ENCODE measurements at regions of chr10 and their contacts with region 1.

Region 1: DNA sequence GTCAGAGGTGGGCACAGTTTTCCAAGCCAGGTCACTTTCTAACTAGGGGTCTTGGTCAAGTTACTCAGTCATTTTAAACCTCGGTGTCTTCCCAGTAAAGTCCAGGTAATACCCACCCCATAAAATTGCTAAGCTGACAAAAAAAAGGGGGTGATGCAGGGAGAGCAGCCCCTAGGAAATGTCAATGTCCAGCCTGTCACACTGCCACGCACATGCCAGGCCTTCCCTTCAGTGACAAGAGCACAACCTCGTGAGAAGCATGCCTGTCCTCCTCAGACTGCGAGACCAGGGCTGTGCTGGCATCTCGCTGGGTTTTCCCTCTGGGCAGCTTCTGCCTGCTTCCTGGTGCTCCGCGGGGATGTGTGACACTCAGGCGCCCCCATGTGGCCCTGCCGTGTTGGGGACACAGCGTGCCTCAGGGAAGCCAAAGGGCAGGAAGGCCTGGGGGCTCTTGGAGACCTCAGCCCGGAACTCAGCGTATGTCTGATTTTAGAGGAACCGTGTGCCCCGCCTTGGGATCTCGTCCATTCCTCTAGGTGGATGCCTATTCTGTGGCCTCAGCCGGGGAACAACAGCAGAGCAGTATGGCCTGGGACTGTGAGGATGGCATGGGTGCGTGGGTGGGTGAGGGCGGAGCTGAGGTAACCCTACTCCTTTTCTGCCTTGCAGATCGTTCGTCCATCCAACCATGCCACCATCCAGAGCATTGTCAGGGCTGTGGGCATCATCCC is 10.2 kb upstream of the GDF2 start:
- DNase-seq: peak; percentile 76 to 86
- ATAC-seq: peak; percentile 89 to 97
- H3K4me3 ChIP-seq: no peak overlapping the region
- H3K27ac ChIP-seq: no peak overlapping the region
- H3K4me1 ChIP-seq: no peaks in the 10 kb centered on the region
- CTCF ChIP-seq: peak; percentile 85
- EP300 ChIP-seq: no peak
- POLR2A ChIP-seq: no peak
- RAD21 ChIP-seq: peak; percentile 95

Region 2: GRCh38 chr10:46992803-46993561 is 319.1 kb before region 1 on chr10:
- CTCF ChIA-PET with region 1: interaction called, 55 read pairs
- POLR2A ChIA-PET with region 1: no interaction called
- DNase-seq: peak; percentile 28 to 31
- ATAC-seq: peak; percentile 92
- H3K4me3 ChIP-seq: no peak overlapping the region
- H3K27ac ChIP-seq: 0 out of 6 replicates have a peak overlapping the region, but pooled peaks of 1 of the 2 experiments have one; percentile 13
- H3K4me1 ChIP-seq: no peaks in the 10 kb centered on the region
- CTCF ChIP-seq: peak; percentile 32; the same call in 2 of the 3 replicates
- EP300 ChIP-seq: no peak
- POLR2A ChIP-seq: no peak
- RAD21 ChIP-seq: peak in 1 of 2 experiments; percentile 46; a peak in 4 of 5 replicates

Region 3: DNA sequence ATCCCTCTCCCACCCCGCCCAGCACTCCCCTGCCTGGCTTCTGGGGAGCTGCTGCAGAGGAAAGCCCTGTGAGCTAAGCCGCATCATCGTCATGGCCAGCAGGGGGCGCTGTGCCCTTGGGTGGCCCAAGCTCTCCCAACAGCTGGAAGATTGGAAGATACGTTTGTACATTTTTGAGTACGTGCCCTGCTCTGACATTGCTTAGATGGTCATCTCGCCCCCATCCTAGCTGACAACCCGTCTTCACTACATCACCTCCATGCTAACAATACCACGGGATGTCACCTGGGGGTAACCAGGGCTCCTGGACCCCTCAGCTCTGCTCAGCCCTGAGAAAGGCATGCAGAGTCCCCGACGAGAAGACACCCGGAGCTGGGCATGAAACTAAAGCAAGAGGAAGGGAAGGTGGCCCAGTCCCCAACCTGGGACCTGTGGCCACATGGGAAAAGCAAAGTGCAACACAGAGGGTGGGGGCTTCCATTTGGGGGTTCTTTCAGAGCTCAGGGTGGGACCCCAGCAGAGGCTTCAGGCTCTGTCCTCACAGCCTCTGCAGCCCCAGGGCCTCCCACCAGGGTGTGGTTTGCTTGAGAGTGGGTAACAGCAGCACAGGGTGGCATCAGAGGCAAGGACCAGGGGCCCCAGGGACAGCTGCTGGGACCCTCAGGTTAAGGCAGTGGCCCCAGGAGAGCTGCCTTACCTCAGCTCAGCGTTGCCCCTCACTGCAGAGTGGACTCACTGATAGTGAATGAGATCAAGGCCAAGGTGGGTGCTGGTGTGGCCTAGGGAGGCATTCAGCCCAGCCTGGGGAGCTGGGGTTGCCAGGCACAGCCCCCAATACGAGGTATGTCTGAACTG is 264.2 kb before region 1 on chr10:
- CTCF ChIA-PET with region 1: interaction called, 213 read pairs
- POLR2A ChIA-PET with region 1: interaction called, 4 read pairs
- DNase-seq: peak; percentile 71 to 75
- ATAC-seq: peak; percentile 79 to 95
- H3K4me3 ChIP-seq: no peak overlapping the region
- H3K27ac ChIP-seq: no peak overlapping the region
- H3K4me1 ChIP-seq: no peaks in the 10 kb centered on the region
- CTCF ChIP-seq: peak; percentile 84
- EP300 ChIP-seq: no peak
- POLR2A ChIP-seq: no peak
- RAD21 ChIP-seq: peak; percentile 77 to 89

Region 4: DNA sequence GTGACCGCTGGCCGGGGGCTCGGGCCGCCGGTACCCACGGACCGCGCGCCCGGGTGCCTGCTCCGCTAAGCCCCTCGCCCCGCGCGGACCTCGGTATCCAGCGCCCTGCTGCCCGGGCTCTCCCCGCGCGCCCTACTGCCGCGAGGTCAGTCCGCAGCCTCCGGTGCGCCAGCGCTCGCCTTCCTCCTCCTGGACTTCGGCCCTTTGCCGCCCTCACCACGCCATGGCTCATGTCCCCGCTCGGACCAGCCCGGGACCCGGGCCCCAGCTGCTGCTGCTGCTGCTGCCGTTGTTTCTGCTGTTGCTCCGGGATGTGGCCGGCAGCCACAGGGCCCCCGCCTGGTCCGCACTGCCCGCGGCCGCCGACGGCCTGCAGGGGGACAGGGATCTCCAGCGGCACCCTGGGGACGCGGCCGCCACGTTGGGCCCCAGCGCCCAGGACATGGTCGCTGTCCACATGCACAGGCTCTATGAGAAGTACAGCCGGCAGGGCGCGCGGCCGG is 11.6 kb before region 1 on chr10:
- CTCF ChIA-PET with region 1: interaction called, 26 read pairs
- POLR2A ChIA-PET with region 1: no interaction called
- DNase-seq: no peak
- ATAC-seq: peak; percentile 27 to 70; a peak in 4 of 6 replicates
- H3K4me3 ChIP-seq: peak overlapping the region; percentile 49
- H3K27ac ChIP-seq: peak overlapping the region in 1 of 2 experiments; percentile 53; a peak in 2 of 6 replicates
- H3K4me1 ChIP-seq: no peaks in the 10 kb centered on the region
- CTCF ChIP-seq: no peak
- EP300 ChIP-seq: no peak
- POLR2A ChIP-seq: no peak
- RAD21 ChIP-seq: no peak

Region 5: GRCh38 chr10:47331954-47332353 is 19.9 kb after region 1 on chr10:
- CTCF ChIA-PET with region 1: interaction called, 68 read pairs
- POLR2A ChIA-PET with region 1: no interaction called
- DNase-seq: no peak
- ATAC-seq: no peak
- H3K4me3 ChIP-seq: no peak overlapping the region
- H3K27ac ChIP-seq: no peak overlapping the region
- H3K4me1 ChIP-seq: peaks cover 6% of the 10 kb centered on the region; the same call in 1 of the 3 replicates
- CTCF ChIP-seq: no peak
- EP300 ChIP-seq: no peak
- POLR2A ChIP-seq: no peak
- RAD21 ChIP-seq: no peak

Region 6: DNA sequence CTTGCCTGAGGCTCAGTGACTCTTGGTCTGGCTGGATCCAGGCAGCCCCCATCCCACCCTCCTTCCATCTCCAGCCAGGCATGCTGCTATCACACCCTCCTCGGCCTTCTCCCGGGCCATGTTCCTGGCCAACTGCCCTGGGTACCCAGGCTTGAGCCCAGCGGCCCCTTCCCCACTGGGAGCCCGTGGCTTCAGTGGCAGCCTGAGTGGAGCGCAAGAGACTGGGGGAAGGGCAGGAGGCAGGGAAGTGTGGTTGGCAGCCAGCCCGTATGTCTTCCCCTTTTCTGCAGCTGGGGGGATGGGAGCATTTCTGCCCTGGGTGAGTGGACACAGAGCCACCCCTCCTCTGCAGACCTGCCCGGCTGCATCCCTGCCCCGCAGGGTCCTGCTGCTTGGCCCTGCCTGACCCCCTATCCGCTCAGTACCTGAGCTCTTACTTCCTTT is 1144.3 kb after region 1 on chr10:
- CTCF ChIA-PET with region 1: no interaction called
- POLR2A ChIA-PET with region 1: no interaction called
- DNase-seq: no peak
- ATAC-seq: no peak
- H3K4me3 ChIP-seq: no peak overlapping the region
- H3K27ac ChIP-seq: no peak overlapping the region
- H3K4me1 ChIP-seq: no peaks in the 10 kb centered on the region
- CTCF ChIP-seq: no peak
- EP300 ChIP-seq: no peak
- POLR2A ChIP-seq: no peak
- RAD21 ChIP-seq: no peak